GM12878 (cell line): ENCODE measurements at regions of chr11 and their contacts with region 1.

Region 1: DNA sequence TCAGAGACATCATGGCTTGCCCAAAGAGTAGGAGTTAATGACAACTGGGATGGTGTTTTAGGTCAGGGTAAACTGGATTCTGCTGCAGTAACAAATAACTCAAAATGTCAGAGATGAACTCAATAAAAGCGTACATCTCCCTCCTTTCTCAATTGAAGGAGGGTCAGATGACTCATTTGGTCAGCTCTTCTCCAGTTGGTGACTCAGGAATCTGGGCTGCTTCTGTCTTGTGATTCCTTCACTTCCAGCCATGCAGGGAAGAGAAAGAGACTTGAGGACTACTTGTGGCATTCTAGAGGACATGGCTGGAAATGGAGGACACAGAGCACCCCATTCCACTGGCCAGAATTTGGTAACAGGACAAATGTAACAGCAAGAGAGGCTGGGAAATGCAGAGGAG is 3.2 kb upstream of the SYT13 start:
- DNase-seq: no peak
- ATAC-seq: no peak
- H3K4me3 ChIP-seq: no peak overlapping the region
- H3K27ac ChIP-seq: no peak overlapping the region
- H3K4me1 ChIP-seq: no peaks in the 10 kb centered on the region
- H3K27me3 ChIP-seq: peaks cover 6 to 8% of the 10 kb centered on the region in 2 experiments
- CTCF ChIP-seq: no peak
- EP300 ChIP-seq: no peak
- POLR2A ChIP-seq: no peak
- RAD21 ChIP-seq: no peak

Region 2: GRCh38 chr11:44893846-44894617 is 395.3 kb before region 1 on chr11:
- CTCF ChIA-PET with region 1: no interaction called
- POLR2A ChIA-PET with region 1: no interaction called
- RAD21 ChIA-PET with region 1: no interaction called
- SMC1A ChIA-PET with region 1: no interaction called
- in situ Hi-C with region 1: no loop called
- intact Hi-C with region 1: no loop called
- DNase-seq: no peak
- ATAC-seq: peak; percentile 98
- H3K4me3 ChIP-seq: no peak overlapping the region
- H3K27ac ChIP-seq: no peak overlapping the region
- H3K4me1 ChIP-seq: no peaks in the 10 kb centered on the region
- H3K27me3 ChIP-seq: no peaks in the 10 kb centered on the region; a peak in 2 of 4 replicates
- CTCF ChIP-seq: peak; percentile 81 to 86 (median 83)
- EP300 ChIP-seq: no peak
- POLR2A ChIP-seq: no peak
- RAD21 ChIP-seq: peak; percentile 81

Region 3: GRCh38 chr11:45110562-45110961 is 178.8 kb before region 1 on chr11:
- CTCF ChIA-PET with region 1: interaction called, 14 read pairs
- POLR2A ChIA-PET with region 1: no interaction called
- RAD21 ChIA-PET with region 1: interaction called, 3 read pairs
- SMC1A ChIA-PET with region 1: interaction called, 4 read pairs
- in situ Hi-C with region 1: no loop called
- intact Hi-C with region 1: loop called (anchors 1 kb)
- DNase-seq: no peak
- ATAC-seq: peak; percentile 78
- H3K4me3 ChIP-seq: no peak overlapping the region
- H3K27ac ChIP-seq: no peak overlapping the region
- H3K4me1 ChIP-seq: no peaks in the 10 kb centered on the region
- H3K27me3 ChIP-seq: no peaks in the 10 kb centered on the region; a peak in 1 of 4 replicates
- CTCF ChIP-seq: peak; percentile 54 to 76 (median 60)
- EP300 ChIP-seq: no peak
- POLR2A ChIP-seq: no peak
- RAD21 ChIP-seq: peak; percentile 85

Region 4: GRCh38 chr11:45252134-45252855 is 37.1 kb before region 1 on chr11:
- CTCF ChIA-PET with region 1: interaction called, 9 read pairs
- POLR2A ChIA-PET with region 1: no interaction called
- RAD21 ChIA-PET with region 1: no interaction called
- SMC1A ChIA-PET with region 1: no interaction called
- in situ Hi-C with region 1: no loop called
- intact Hi-C with region 1: loop called (anchors 2 kb)
- DNase-seq: no peak
- ATAC-seq: peak; percentile 94
- H3K4me3 ChIP-seq: no peak overlapping the region
- H3K27ac ChIP-seq: no peak overlapping the region
- H3K4me1 ChIP-seq: no peaks in the 10 kb centered on the region
- H3K27me3 ChIP-seq: no peaks in the 10 kb centered on the region; a peak in 1 of 4 replicates
- CTCF ChIP-seq: peak; percentile 58 to 73 (median 68); a peak in 5 of 6 replicates
- EP300 ChIP-seq: no peak
- POLR2A ChIP-seq: no peak
- RAD21 ChIP-seq: 0 out of 2 replicates have a peak, but pooled peaks have one; percentile 5